ENCODE measurements at regions of chr2 and their contacts with region 1.

Region 1: GRCh38 chr2:95345566-95346230 is 48.6 kb downstream of the KCNIP3 start:
- DNase-seq: peak; percentile 91

Region 2: DNA sequence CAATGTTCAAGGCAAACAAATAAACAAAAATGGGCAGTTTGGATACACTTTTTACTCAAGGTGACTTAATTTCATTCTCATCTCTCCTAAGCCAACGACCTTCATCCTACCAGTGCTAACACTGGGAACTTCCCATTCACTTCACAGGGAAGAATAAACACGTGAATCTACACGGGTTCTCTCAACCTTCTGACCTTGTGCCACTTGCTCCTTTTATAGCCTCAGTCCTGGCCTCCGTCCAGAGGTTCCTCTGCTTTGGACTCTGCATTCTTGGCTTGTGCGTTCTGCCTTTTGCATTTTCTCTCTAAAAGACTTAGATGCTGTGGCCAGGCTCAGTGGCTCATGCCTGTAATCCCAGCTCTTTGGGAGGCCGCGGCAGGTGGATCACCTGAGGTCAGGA is 166.2 kb before region 1 on chr2:
- CTCF ChIA-PET with region 1: no interaction called
- POLR2A ChIA-PET with region 1: no interaction called
- DNase-seq: no peak

Region 3: GRCh38 chr2:95329891-95330780 is 15.6 kb before region 1 on chr2:
- CTCF ChIA-PET with region 1: interaction called, 12 read pairs
- POLR2A ChIA-PET with region 1: interaction called, 3 read pairs
- DNase-seq: peak; percentile 38

Region 4: DNA sequence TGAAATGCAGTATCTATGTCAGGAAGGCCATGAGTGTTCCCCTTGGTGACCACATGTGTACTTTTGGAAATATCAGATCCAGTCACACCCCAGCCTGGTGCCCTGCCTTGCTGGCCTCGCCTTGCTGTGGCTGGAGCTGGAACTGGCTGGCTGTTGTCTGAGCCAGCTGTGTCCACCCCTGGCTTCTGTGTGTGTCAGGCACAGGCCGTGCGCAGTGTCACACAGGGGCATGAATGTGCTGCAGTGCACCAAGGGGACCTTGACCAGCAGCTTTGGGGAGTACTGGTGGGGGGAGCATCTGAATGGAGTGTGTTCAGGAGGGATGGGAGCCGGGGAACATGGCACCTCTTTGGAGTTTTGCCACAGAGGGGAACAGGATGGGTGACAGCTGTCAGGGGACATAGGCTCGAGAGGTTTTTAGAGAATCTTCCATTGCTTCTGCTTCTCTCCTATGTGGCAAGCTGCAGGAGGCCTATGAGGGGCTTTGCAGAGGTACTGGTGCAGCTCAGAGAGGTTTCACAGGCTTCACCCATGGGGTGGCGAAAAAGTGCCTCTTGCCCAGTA is 12.1 kb after region 1 on chr2:
- CTCF ChIA-PET with region 1: no interaction called
- POLR2A ChIA-PET with region 1: no interaction called
- DNase-seq: no peak

Region 5: DNA sequence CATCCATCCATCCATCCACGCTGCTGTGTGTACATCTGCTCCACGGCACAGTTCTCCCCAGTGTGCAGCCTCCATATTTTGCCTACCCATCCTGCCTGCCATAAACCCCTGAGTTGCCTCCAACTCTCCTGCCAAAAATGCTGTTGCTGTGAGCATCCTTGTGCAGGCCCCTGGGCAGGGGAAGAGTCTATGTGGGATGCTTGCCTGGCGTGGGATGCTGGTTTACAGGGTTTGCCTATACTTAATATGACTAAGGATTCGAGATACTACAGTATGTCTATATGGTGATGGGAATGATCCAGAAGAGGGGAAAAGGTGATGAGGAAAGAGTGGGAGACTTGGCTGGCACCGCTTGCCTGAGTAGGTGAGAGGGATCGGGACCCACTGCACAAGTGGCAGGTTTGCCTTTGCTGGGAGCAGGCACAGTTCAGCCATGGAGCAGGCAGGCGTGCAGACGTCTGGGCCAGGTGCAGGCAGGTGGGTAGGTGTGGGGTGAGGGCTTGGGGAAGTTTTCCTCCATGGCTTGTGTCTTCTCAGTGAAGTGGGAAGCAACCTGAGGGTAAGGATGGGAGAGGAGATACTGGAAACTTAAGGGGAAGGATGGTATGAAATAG is 26.6 kb after region 1 on chr2:
- CTCF ChIA-PET with region 1: no interaction called
- POLR2A ChIA-PET with region 1: no interaction called
- DNase-seq: no peak

Region 6: DNA sequence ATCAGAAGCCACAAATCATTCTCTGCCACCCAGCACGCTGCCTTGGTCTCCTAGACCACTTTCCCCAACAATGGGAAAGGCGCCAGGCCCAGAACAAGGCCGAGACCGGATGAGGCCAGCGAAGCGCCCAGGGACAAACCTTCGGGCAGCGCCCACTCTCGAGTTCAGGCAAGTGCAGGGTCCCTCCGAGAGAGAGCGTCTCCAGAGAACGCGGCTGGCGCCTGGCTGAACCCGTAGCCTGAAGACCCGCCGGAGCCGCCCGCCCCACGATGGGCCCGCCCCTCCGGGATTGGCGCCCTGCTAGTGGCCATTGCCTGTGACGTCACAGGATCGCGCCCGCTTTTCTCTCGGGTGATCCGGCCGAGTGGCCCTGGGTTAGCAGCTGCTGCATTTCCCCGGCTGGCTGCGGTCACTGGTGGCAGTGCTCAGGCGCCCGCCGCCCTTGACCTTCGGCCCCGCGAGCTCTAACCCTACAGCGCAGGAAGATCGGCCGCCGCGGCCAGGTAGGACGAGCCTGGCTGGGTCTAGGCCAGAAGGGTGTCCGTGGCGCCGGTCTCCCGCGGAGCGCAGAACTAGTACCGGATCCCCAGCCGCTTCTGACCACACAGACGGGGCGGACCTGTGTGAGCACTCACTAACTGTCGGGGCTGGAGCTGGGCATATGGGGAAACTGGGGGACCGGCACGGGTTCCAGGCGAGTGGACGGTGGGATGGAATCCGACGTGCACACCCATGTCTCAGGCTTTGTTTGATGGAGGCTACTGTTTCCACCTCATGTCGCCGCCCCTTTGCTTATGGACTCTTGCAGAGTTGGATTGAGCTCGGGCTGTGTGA is 56.9 kb after region 1 on chr2 and contains the start of gene FAHD2A:
- CTCF ChIA-PET with region 1: interaction called, 4 read pairs
- POLR2A ChIA-PET with region 1: interaction called, 10 read pairs
- DNase-seq: peak; percentile 96

Region 7: GRCh38 chr2:95760806-95761530 is 415.3 kb after region 1 on chr2:
- CTCF ChIA-PET with region 1: no interaction called
- POLR2A ChIA-PET with region 1: no interaction called
- DNase-seq: no peak